Pancreas (tissue), 10 donors: ENCODE measurements at regions of chr3 and their contacts with region 1.

Region 1: DNA sequence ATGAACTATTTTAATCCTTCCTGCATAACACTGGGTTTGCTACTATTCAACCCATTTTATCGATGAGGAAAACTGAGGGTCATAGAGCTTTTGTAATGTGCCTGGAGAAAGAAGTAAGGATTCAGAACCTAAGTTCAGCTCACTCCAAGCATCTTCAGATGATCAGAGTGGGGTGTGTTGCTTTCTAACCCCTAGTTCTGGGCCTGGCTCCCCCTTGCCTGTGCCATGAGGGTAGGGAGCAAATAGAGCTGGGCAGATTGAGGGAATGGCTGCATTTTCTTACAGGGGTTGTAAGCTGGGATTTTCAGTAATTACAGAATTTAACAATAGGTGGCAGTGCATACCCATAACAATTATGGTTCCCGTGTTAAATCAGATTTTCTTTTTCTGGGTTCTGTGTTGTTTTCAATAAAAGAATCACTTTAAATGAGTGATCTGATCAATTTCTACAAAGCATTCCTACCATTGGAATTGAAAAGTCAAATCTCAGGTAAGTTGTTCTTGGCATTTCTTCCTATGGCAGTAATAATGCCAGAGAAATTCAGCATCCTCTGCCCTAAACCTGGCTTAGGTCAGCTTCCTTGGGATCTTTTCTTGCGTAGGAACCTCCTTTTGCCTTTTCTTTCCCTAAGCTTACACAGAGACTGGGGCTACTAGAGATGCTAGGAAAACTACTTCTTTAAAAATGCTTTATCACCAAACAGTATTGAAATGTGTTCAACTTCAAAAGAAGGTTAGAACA is 103.8 kb upstream of the IL12A start:
- DNase-seq: no peak
- ATAC-seq: peak in 3 of 4 donors; percentile 64 to 71 (median 65)
- H3K4me3 ChIP-seq: no peak overlapping the region
- H3K27ac ChIP-seq: no peak overlapping the region
- H3K4me1 ChIP-seq: no peaks in the 10 kb centered on the region
- H3K27me3 ChIP-seq: no peaks in the 10 kb centered on the region
- CTCF ChIP-seq: peak in 2 of 4 donors; percentile 31 to 35

Region 2: DNA sequence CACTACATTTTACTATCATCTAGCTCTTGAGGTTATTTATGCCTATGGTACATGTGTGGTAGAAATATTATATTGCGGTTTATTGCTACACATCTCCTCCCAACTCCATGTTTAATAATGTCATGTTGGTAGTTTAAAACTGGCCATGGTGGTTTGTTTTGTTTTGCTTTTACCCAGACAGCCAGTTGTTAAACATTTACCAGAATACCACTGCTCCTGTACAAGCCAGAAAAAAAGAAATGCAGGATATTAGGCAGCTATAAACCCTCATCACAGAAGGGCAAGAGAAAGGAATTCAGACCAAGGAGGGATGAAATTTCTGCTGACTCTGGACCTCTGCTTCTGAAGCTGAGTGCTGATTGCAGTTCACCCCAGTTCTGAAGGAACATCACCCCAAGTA is 348.0 kb before region 1 on chr3:
- intact Hi-C with region 1: no loop called
- DNase-seq: no peak
- ATAC-seq: no peak
- H3K4me3 ChIP-seq: no peak overlapping the region
- H3K27ac ChIP-seq: no peak overlapping the region
- H3K4me1 ChIP-seq: no peaks in the 10 kb centered on the region
- H3K27me3 ChIP-seq: no peaks in the 10 kb centered on the region
- CTCF ChIP-seq: no peak

Region 3: GRCh38 chr3:160003520-160004128 is 118.8 kb after region 1 on chr3:
- intact Hi-C with region 1: loop called in 1 of 3 experiments (anchors 5 kb)
- DNase-seq: peak in 4 of 6 donors; percentile 27 to 69 (median 34)
- ATAC-seq: peak in 3 of 4 donors; percentile 76 to 83 (median 76)
- H3K4me3 ChIP-seq: no peak overlapping the region
- H3K27ac ChIP-seq: no peak overlapping the region
- H3K4me1 ChIP-seq: no peaks in the 10 kb centered on the region
- H3K27me3 ChIP-seq: no peaks in the 10 kb centered on the region
- CTCF ChIP-seq: peak; percentile 15 to 31 (median 24)